ENCODE measurements at regions of chr19 and their contacts with region 1.

Region 1: DNA sequence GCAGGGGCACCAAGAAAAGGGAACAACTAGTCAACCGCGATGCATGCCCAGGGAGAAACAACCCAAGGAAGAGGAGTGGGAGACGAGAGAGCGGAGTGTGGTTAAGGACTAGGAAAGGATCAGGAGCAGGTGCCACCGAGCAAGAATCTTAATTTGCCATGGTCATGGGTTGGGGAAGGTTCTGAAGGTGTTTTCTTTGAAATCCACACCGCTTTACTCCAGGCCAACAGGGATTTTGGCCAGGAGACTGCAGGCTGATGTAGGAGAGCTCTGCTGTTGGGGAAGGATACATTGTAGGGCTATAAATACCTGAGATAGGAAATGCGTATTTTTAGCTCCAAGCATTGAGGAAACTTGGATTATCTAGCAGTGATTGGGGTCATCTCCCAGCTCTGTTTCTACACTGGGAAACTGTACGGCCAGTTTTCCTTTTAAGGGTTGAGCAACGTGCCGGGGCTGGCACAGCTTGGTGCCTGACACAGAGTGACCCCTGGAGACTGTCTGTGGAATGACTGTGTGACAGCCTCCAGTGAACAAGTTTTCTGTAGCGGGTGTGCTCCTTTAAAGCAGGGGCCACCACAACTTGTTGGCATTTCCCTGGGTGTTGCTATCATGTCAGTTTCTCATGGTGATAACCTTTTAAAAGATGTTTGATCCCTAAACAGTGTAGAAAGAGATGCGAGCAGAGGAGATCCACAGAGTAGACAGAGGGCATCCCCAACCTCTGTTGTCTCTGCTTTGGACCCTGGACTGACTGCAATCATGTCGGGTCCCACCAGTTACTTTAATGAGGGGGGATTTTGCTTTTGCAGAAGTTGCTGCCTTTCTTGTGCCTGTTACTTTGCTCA is 34.3 kb downstream of the ZNF536 start:
- DNase-seq: peak; percentile 34
- ATAC-seq: peak; percentile 72 to 81

Region 2: DNA sequence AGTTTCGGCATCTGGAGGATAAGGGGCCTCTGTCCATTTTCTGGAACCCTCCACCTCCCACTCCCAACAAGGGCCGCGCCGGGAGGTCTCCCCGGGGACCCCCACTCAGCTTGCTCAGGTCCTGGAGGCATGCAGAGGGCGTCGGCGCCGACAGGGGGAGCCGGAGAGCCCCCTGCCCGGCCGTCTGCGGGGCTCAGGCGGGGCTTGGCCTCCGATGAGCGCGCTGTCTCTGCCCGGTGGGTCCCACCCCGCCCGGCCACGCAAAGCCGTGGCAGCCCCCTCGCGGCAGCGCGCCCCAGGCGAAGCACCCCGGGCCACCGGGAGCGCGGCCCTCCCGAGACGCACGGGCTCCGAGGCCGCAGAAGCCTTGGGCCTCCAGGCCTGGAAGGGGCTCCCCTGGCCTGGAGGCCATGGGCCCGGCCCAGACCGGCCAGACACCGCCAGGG is 184.0 kb before region 1 on chr19:
- intact Hi-C with region 1: loop called (anchors 5 kb)
- DNase-seq: peak; percentile 30
- ATAC-seq: peak in 1 of 2 donors; percentile 62

Region 3: DNA sequence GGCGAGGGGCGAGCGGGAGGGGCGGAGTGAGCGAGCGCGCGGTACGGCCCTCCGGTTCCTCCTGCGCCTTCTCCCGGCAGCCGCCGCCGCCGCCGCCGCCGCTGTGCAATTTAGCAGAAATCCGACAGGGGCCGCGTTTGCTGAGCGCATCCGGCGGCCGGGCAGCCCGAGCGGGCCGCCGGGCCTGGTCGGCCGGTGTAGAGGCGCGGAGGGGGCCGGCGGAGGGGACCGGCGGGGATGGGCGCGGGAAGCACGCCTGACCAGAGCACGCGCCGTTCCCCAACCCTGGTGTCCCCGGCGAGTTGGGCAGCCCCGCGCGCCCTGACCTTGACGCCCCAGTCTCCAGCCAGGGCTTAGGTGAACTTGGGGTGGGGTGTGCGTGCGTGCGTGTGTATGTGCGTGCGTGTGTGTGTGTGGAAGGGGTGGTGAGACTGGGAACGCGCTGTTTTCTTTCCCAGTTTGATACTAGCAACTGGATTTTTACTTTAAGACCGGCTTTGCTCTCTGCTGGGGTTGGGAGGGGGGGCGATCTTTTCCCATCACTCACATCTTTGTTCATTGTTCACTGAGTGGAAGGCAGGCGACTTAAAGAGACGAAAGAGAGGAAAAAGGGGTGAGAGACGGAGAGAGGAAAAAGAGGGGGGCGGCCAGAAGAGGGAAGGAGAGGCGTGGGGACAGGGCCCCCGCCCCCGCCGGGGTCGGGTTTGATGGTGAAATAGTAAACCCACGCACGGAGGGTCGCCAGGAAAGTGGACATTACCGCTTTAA is 178.6 kb before region 1 on chr19:
- intact Hi-C with region 1: loop called (anchors 5 kb)
- DNase-seq: peak; percentile 65
- ATAC-seq: peak; percentile 80 to 82

Region 4: DNA sequence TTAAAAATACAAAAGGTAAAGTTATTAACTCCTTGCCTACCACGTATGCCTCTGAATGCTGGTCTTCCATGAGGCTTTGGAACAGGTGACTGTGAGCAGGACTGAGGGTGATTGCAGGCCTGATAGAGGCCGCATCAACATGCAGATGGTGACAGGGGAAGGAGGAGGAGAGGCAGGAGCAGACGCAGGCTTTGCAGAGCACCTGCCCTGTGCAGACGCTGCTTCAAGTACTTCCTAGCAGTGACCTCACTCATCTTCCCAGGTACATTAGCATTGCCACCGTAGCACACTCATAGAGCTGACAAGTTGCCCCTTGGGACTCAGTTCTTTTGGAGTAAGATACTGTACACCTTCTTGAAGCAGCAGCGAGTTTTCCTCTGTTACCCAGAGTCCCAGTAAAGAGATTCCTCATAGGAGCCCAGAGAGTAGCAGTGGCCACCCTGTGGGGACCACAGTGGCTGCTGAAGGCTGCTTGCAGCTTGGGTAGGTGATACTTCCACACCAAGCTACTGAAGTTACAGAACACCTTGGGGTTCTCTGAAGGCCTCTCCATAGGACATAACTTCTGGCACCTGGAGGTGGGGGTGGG is 21.7 kb after region 1 on chr19:
- intact Hi-C with region 1: no loop called
- DNase-seq: no peak
- ATAC-seq: no peak